GM10248 (cell line): ENCODE measurements at regions of chr4 and their contacts with region 1.

Region 1: GRCh38 chr4:7770224-7771050 is 169.2 kb downstream of the AFAP1 start:
- DNase-seq: peak; percentile 55
- CTCF ChIP-seq: peak; percentile 56

Region 2: GRCh38 chr4:7781366-7781765 is 10.9 kb after region 1 on chr4:
- CTCF ChIA-PET with region 1: interaction called, 35 read pairs
- POLR2A ChIA-PET with region 1: no interaction called
- DNase-seq: no peak
- CTCF ChIP-seq: no peak

Region 3: GRCh38 chr4:7792616-7793015 is 22.2 kb after region 1 on chr4:
- CTCF ChIA-PET with region 1: interaction called, 24 read pairs
- POLR2A ChIA-PET with region 1: no interaction called
- DNase-seq: peak; percentile 45
- CTCF ChIP-seq: no peak